ENCODE measurements at regions of chr16 and their contacts with region 1.

Region 1: GRCh38 chr16:24253192-24253591 is 2.9 kb upstream of the CACNG3 start:
- DNase-seq: no peak
- ATAC-seq: peak; percentile 95
- H3K4me3 ChIP-seq: no peak overlapping the region
- H3K27ac ChIP-seq: no peak overlapping the region
- H3K4me1 ChIP-seq: no peaks in the 10 kb centered on the region
- H3K27me3 ChIP-seq: peaks cover 0 to 5% of the 10 kb centered on the region in 2 experiments; a peak in 3 of 4 replicates
- CTCF ChIP-seq: peak; percentile 60 to 78 (median 71)
- EP300 ChIP-seq: no peak
- POLR2A ChIP-seq: no peak
- RAD21 ChIP-seq: peak; percentile 62

Region 2: GRCh38 chr16:23739516-23739915 is 513.7 kb before region 1 on chr16:
- CTCF ChIA-PET with region 1: interaction called, 7 read pairs
- POLR2A ChIA-PET with region 1: no interaction called
- RAD21 ChIA-PET with region 1: no interaction called
- SMC1A ChIA-PET with region 1: interaction called, 6 read pairs
- in situ Hi-C with region 1: loop called (anchors 10 kb)
- intact Hi-C with region 1: loop called (anchors 5 kb)
- DNase-seq: no peak
- ATAC-seq: no peak
- H3K4me3 ChIP-seq: no peak overlapping the region
- H3K27ac ChIP-seq: no peak overlapping the region
- H3K4me1 ChIP-seq: peaks cover 4% of the 10 kb centered on the region
- H3K27me3 ChIP-seq: no peaks in the 10 kb centered on the region; a peak in 2 of 4 replicates
- CTCF ChIP-seq: no peak
- EP300 ChIP-seq: no peak
- POLR2A ChIP-seq: no peak
- RAD21 ChIP-seq: no peak

Region 3: GRCh38 chr16:24041826-24042631 is 211.2 kb before region 1 on chr16:
- CTCF ChIA-PET with region 1: interaction called, 16 read pairs
- POLR2A ChIA-PET with region 1: no interaction called
- RAD21 ChIA-PET with region 1: interaction called, 12 read pairs
- SMC1A ChIA-PET with region 1: interaction called, 6 read pairs
- in situ Hi-C with region 1: loop called (anchors 5 kb)
- intact Hi-C with region 1: loop called (anchors 5 kb)
- DNase-seq: peak; percentile 45
- ATAC-seq: peak; percentile 98
- H3K4me3 ChIP-seq: no peak overlapping the region
- H3K27ac ChIP-seq: no peak overlapping the region
- H3K4me1 ChIP-seq: no peaks in the 10 kb centered on the region
- H3K27me3 ChIP-seq: no peaks in the 10 kb centered on the region
- CTCF ChIP-seq: peak; percentile 64 to 80 (median 72)
- EP300 ChIP-seq: no peak
- POLR2A ChIP-seq: no peak
- RAD21 ChIP-seq: peak; percentile 77

Region 4: GRCh38 chr16:24151482-24151939 is 101.7 kb before region 1 on chr16:
- CTCF ChIA-PET with region 1: no interaction called
- POLR2A ChIA-PET with region 1: no interaction called
- RAD21 ChIA-PET with region 1: no interaction called
- SMC1A ChIA-PET with region 1: no interaction called
- in situ Hi-C with region 1: no loop called
- intact Hi-C with region 1: no loop called
- DNase-seq: no peak
- ATAC-seq: no peak
- H3K4me3 ChIP-seq: no peak overlapping the region
- H3K27ac ChIP-seq: no peak overlapping the region
- H3K4me1 ChIP-seq: peaks cover 26% of the 10 kb centered on the region
- H3K27me3 ChIP-seq: no peaks in the 10 kb centered on the region
- CTCF ChIP-seq: no peak
- EP300 ChIP-seq: no peak
- POLR2A ChIP-seq: no peak
- RAD21 ChIP-seq: no peak

Region 5: GRCh38 chr16:24198807-24199533 is 54.2 kb before region 1 on chr16:
- CTCF ChIA-PET with region 1: interaction called, 4 read pairs
- POLR2A ChIA-PET with region 1: no interaction called
- RAD21 ChIA-PET with region 1: no interaction called
- SMC1A ChIA-PET with region 1: no interaction called
- in situ Hi-C with region 1: no loop called
- intact Hi-C with region 1: loop called (anchors 10 kb)
- DNase-seq: no peak
- ATAC-seq: no peak
- H3K4me3 ChIP-seq: no peak overlapping the region
- H3K27ac ChIP-seq: no peak overlapping the region
- H3K4me1 ChIP-seq: peaks cover 17% of the 10 kb centered on the region
- H3K27me3 ChIP-seq: no peaks in the 10 kb centered on the region
- CTCF ChIP-seq: no peak
- EP300 ChIP-seq: no peak
- POLR2A ChIP-seq: no peak
- RAD21 ChIP-seq: no peak

Region 6: DNA sequence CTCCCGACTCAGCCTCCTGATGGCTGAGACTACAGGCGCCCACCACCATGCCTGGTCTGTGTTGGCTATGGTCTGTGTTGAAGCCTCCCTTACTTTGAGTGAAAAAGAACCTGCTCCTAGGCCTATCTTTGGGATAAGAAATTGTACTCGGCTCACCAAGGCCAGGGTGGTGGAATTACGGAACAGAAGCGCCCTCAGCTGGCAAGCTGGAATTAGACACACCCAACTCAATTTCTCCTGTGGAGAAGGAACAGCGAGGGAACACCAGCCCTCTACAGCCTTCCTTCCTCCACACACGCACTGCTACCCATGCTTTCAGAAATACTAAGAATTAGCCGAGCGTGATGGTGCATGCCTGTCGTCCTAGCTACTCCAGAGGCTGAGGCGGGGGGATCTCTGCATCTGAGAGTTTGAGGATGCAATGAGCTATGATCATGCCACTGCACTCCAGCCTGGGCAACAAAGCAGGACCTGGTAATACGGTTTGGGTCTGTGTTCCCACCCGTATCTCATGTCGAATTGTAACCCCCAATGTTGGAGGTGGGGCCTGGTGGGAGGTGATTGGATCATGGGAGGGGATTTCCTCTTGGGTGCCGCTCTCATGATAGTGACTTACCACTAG is 246.1 kb after region 1 on chr16:
- CTCF ChIA-PET with region 1: interaction called, 17 read pairs
- POLR2A ChIA-PET with region 1: no interaction called
- RAD21 ChIA-PET with region 1: interaction called, 8 read pairs
- SMC1A ChIA-PET with region 1: interaction called, 10 read pairs
- in situ Hi-C with region 1: no loop called
- intact Hi-C with region 1: loop called (anchors 2 kb)
- DNase-seq: no peak
- ATAC-seq: peak; percentile 71
- H3K4me3 ChIP-seq: no peak overlapping the region
- H3K27ac ChIP-seq: no peak overlapping the region
- H3K4me1 ChIP-seq: no peaks in the 10 kb centered on the region; the same call in 1 of the 2 replicates
- H3K27me3 ChIP-seq: no peaks in the 10 kb centered on the region
- CTCF ChIP-seq: peak; percentile 41 to 65 (median 52); a peak in 5 of 6 replicates
- EP300 ChIP-seq: no peak
- POLR2A ChIP-seq: no peak
- RAD21 ChIP-seq: peak; percentile 63